GM10248 (cell line): ENCODE measurements at regions of chr11 and their contacts with region 1.

Region 1: DNA sequence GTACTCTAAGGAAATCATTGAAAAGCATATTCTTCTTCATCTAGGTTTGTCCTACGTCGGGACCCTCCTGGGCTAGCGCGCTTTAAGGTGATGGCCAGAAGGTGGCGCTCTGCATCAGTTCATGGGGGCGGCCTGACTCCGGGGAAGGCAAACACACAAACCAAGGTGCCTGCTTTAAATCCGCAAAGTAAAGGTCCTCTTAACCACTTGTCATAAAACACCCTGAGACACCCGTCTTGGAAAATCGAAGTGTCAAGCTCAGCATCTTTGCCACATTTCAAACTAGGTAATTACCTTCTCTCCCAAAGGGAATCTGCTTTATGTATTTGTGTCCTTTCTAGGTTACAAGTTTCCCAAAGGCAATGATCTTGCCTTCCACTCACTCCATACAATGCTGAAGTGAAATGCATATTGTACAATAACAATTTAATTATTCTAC is 33.9 kb downstream of the LMO2 start:
- DNase-seq: peak; percentile 74
- CTCF ChIP-seq: peak; percentile 96

Region 2: GRCh38 chr11:33402066-33402465 is 455.9 kb before region 1 on chr11:
- CTCF ChIA-PET with region 1: no interaction called
- POLR2A ChIA-PET with region 1: no interaction called
- DNase-seq: no peak
- CTCF ChIP-seq: no peak

Region 3: GRCh38 chr11:33829433-33830141 is 28.4 kb before region 1 on chr11:
- CTCF ChIA-PET with region 1: interaction called, 11 read pairs
- POLR2A ChIA-PET with region 1: no interaction called
- DNase-seq: peak; percentile 81
- CTCF ChIP-seq: peak; percentile 80

Region 4: GRCh38 chr11:33869481-33870422 is 11.8 kb after region 1 on chr11:
- CTCF ChIA-PET with region 1: interaction called, 33 read pairs
- POLR2A ChIA-PET with region 1: interaction called, 4 read pairs
- DNase-seq: peak; percentile 56
- CTCF ChIP-seq: no peak

Region 5: DNA sequence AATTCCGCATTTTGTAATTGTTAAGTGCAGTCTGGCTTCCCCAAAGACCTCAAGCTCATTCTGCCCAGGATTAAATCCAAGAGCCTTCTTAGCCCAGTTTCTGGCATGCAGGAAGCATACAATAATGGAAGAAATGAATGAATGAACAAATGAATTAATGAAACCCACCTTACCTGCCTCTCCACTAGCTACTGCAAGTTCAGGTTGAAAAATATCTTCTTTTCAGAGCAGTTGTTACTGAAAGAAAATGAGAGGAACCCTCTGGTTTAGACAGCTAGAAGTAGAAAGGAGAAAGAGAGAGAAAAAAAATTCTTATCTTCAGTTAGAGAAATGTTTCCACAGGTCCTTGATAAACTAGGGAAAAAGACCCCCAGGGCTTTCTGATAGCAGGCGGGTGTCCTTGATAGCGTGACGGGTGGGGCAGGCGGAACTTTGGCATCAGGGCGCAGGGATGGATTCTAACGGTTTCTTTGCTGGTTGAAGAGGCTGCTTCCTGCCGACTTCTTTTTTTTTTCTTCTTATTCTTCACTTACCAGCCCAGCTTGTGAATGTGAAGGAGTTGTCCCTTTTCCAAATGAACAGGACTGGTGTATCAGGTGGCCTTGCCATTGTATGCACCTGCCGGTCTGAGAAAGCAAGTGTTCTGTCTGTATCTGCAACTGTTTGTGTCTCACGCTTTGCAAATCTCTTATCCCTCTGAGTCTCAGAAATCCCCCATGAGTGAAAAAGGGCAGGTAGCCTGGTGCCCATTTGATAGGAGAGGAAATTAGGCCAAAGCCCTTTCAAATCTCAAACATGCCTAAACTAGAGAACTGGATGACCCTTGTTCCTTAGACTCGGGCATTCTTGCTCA is 23.9 kb after region 1 on chr11:
- CTCF ChIA-PET with region 1: interaction called, 14 read pairs
- POLR2A ChIA-PET with region 1: no interaction called
- DNase-seq: no peak
- CTCF ChIP-seq: no peak

Region 6: GRCh38 chr11:33987975-33988580 is 130.1 kb after region 1 on chr11:
- CTCF ChIA-PET with region 1: interaction called, 50 read pairs
- POLR2A ChIA-PET with region 1: no interaction called
- DNase-seq: peak; percentile 73
- CTCF ChIP-seq: peak; percentile 83